H1 (cell line): ENCODE measurements at regions of chr11 and their contacts with region 1.

Region 1: DNA sequence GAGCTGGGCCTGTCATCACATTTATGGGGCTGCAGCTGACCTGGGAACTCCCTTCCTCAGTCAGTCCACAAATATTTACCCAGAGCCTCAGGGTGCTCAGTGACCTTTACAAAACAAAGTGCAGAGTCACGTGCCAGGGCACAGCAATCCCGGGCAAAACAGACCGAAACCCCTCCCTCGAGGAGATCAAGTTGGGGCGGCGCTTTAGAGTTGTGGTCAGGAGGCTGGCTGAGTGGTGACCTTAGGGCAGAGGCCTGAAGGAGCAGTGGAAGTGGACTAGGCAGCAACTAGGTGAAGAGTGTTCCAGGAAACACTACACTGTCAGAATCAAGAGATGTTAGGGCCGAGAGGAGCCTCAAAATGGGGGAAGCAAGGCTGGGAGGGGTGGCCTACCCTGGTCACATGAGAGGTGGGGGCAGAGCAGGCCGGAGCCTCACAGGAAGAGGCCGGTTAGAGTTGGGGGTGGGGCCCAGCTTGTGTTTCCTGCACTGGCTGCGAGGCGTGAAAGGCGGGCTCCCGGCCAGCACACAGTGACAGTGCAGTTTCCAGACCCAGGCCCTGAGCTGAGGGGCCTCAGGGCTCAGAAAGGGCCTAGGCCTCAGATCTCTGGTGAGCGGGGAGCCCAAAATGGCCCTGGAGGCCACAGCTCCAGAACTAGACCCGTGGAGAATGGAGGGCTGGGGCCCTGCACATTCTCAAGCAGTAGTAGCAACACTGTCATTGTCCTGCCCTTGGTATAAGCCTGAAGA is 3.7 kb upstream of the NEAT1 start:
- DNase-seq: peak; percentile 75 to 86
- H3K4me3 ChIP-seq: peak overlapping the region in 2 of 4 experiments; percentile 5 to 37; a peak in 2 of 8 replicates
- H3K27ac ChIP-seq: peak overlapping the region; percentile 87
- H3K4me1 ChIP-seq: peaks cover 21 to 66% (median 46%) of the 10 kb centered on the region in 4 experiments
- H3K27me3 ChIP-seq: no peaks in the 10 kb centered on the region; a peak in 1 of 7 replicates
- CTCF ChIP-seq: no peak
- EP300 ChIP-seq: peak; percentile 13 to 75; a peak in 2 of 3 replicates
- POLR2A ChIP-seq: no peak; a peak in 2 of 3 replicates
- RAD21 ChIP-seq: no peak; a peak in 1 of 4 replicates

Region 2: DNA sequence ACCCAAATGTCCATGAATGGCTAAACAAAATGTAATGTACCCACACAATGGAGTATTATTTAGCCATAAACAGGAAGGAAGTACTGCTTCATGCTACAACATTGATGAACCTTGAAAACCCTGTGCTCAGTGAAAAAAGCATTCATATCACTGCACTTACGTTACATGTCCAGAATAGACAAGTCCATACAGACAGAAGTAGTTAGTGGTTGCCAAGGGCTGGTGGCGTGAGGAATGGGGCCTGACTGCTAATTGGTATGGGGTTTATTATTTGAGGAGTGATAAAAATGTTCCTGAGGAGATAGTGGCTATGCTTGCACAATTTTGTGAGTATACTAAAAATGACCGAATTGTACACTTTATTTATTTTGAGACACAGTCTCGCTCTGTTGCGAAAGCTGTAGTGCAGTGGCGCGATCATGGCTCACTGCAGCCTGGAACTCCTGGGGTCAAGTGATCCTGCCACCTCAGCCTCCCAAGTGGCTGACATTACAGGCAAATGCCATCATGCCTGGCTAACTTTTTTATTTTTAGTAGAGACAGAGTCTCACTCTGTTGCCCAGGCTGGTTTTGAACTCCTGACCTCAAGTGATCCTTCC is 276.9 kb before region 1 on chr11:
- CTCF ChIA-PET with region 1: no interaction called
- POLR2A ChIA-PET with region 1: no interaction called
- DNase-seq: no peak
- H3K4me3 ChIP-seq: no peak overlapping the region
- H3K27ac ChIP-seq: no peak overlapping the region
- H3K4me1 ChIP-seq: no peaks in the 10 kb centered on the region
- H3K27me3 ChIP-seq: no peaks in the 10 kb centered on the region
- CTCF ChIP-seq: no peak
- EP300 ChIP-seq: no peak
- POLR2A ChIP-seq: no peak
- RAD21 ChIP-seq: no peak

Region 3: GRCh38 chr11:65159012-65159411 is 259.9 kb before region 1 on chr11:
- CTCF ChIA-PET with region 1: no interaction called
- POLR2A ChIA-PET with region 1: no interaction called
- DNase-seq: no peak
- H3K4me3 ChIP-seq: no peak overlapping the region
- H3K27ac ChIP-seq: no peak overlapping the region
- H3K4me1 ChIP-seq: no peaks in the 10 kb centered on the region
- H3K27me3 ChIP-seq: no peaks in the 10 kb centered on the region
- CTCF ChIP-seq: no peak
- EP300 ChIP-seq: no peak
- POLR2A ChIP-seq: no peak
- RAD21 ChIP-seq: no peak

Region 4: GRCh38 chr11:65354265-65355012 is 64.4 kb before region 1 on chr11 and contains the start of gene TIGD3:
- CTCF ChIA-PET with region 1: interaction called, 16 read pairs
- POLR2A ChIA-PET with region 1: interaction called, 5 read pairs
- DNase-seq: peak; percentile 85 to 98
- H3K4me3 ChIP-seq: peak within 1 kb of the TSS; percentile 65 to 90 (median 78)
- H3K27ac ChIP-seq: no peak within 1 kb of the TSS
- H3K4me1 ChIP-seq: peaks cover 0 to 10% (median 3%) of the 10 kb centered on the region in 4 experiments; a peak in 5 of 7 replicates
- H3K27me3 ChIP-seq: peaks cover 7 to 29% (median 19%) of the 10 kb centered on the region in 4 experiments
- CTCF ChIP-seq: no peak
- EP300 ChIP-seq: no peak
- POLR2A ChIP-seq: peak in 1 of 2 experiments; percentile 11; a peak in 1 of 3 replicates
- RAD21 ChIP-seq: no peak
- total RNA-seq, gene TIGD3: 0.88 and 1.3 TPM in 2 replicates

Region 5: GRCh38 chr11:65391007-65391406 is 27.9 kb before region 1 on chr11:
- CTCF ChIA-PET with region 1: interaction called, 57 read pairs
- POLR2A ChIA-PET with region 1: interaction called, 14 read pairs
- DNase-seq: no peak
- H3K4me3 ChIP-seq: no peak overlapping the region
- H3K27ac ChIP-seq: no peak overlapping the region
- H3K4me1 ChIP-seq: peaks cover 0 to 14% (median 5%) of the 10 kb centered on the region in 4 experiments; a peak in 5 of 7 replicates
- H3K27me3 ChIP-seq: 0 out of 7 replicates have a peak, but pooled peaks cover 0 to 2% (median 0%) of the 10 kb centered on the region in 4 experiments
- CTCF ChIP-seq: peak in 2 of 3 experiments; percentile 24 to 29; a peak in 2 of 4 replicates
- EP300 ChIP-seq: no peak
- POLR2A ChIP-seq: no peak
- RAD21 ChIP-seq: no peak

Region 6: GRCh38 chr11:65429724-65430405 is 11.0 kb after region 1 on chr11:
- CTCF ChIA-PET with region 1: interaction called, 25 read pairs
- POLR2A ChIA-PET with region 1: interaction called, 33 read pairs
- DNase-seq: no peak
- H3K4me3 ChIP-seq: no peak overlapping the region
- H3K27ac ChIP-seq: no peak overlapping the region
- H3K4me1 ChIP-seq: peaks cover 4 to 26% (median 7%) of the 10 kb centered on the region in 4 experiments
- H3K27me3 ChIP-seq: no peaks in the 10 kb centered on the region
- CTCF ChIP-seq: 0 out of 4 replicates have a peak, but pooled peaks of 1 of the 3 experiments have one; percentile 3
- EP300 ChIP-seq: no peak
- POLR2A ChIP-seq: no peak
- RAD21 ChIP-seq: no peak

Region 7: GRCh38 chr11:65454696-65455456 is 36.0 kb after region 1 on chr11:
- CTCF ChIA-PET with region 1: interaction called, 430 read pairs
- POLR2A ChIA-PET with region 1: interaction called, 79 read pairs
- DNase-seq: peak; percentile 69 to 92
- H3K4me3 ChIP-seq: peak overlapping the region; percentile 46 to 67 (median 54); a peak in 7 of 8 replicates
- H3K27ac ChIP-seq: no peak overlapping the region
- H3K4me1 ChIP-seq: peaks cover 2 to 11% (median 6%) of the 10 kb centered on the region in 4 experiments; a peak in 6 of 7 replicates
- H3K27me3 ChIP-seq: peaks cover 20 to 59% (median 53%) of the 10 kb centered on the region in 4 experiments
- CTCF ChIP-seq: no peak
- EP300 ChIP-seq: no peak
- POLR2A ChIP-seq: peak in 1 of 2 experiments; percentile 29; a peak in 1 of 3 replicates
- RAD21 ChIP-seq: no peak

Region 8: DNA sequence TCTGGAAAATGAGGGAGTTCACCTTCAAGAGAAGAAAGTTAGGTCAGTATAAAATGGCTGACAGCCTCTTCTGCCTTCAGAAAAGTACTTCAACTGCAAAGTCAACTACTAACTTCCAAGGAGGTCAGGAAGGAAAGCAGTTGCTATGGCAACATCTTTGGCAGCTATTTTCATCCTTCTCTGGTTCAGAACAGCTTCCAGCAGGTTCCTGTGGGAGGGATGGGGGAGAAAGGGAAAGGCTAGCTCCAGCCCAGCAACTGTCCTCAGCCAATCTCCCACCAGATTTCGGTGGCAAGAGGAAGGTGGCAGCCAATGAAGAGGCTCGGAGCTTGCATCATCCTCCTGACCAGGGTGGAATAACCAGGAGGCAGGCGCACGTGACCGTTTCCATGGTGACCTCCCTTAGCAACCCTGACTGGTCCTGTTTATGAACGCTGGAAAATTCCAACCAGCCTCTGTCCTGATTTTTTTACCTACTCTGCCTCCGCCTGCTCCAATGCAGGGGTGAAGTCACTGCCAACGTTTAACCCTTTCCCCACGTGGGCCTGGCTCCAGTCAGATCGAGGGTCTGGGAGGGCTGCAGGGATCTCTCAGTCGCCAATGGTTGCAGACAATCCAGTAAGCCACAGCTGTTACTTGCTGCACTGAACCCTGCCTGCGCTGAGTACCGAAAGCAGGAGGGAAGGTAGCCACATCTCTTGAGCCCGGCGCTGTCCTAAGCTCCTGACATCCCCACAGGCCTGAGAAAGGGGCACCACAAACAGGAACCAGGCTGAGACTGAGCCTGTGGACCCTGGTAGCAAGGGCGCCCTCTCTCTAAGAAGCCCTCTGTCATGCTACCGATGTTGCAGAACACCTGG is 68.8 kb after region 1 on chr11:
- CTCF ChIA-PET with region 1: interaction called, 75 read pairs
- POLR2A ChIA-PET with region 1: interaction called, 184 read pairs
- DNase-seq: peak; percentile 95 to 97
- H3K4me3 ChIP-seq: peak overlapping the region; percentile 24 to 49 (median 40); a peak in 7 of 8 replicates
- H3K27ac ChIP-seq: peak overlapping the region; percentile 96
- H3K4me1 ChIP-seq: peaks cover 44 to 56% (median 49%) of the 10 kb centered on the region in 4 experiments
- H3K27me3 ChIP-seq: no peaks in the 10 kb centered on the region
- CTCF ChIP-seq: no peak
- EP300 ChIP-seq: no peak; a peak in 1 of 3 replicates
- POLR2A ChIP-seq: peak in 1 of 2 experiments; percentile 68; a peak in 2 of 3 replicates
- RAD21 ChIP-seq: no peak

Region 9: DNA sequence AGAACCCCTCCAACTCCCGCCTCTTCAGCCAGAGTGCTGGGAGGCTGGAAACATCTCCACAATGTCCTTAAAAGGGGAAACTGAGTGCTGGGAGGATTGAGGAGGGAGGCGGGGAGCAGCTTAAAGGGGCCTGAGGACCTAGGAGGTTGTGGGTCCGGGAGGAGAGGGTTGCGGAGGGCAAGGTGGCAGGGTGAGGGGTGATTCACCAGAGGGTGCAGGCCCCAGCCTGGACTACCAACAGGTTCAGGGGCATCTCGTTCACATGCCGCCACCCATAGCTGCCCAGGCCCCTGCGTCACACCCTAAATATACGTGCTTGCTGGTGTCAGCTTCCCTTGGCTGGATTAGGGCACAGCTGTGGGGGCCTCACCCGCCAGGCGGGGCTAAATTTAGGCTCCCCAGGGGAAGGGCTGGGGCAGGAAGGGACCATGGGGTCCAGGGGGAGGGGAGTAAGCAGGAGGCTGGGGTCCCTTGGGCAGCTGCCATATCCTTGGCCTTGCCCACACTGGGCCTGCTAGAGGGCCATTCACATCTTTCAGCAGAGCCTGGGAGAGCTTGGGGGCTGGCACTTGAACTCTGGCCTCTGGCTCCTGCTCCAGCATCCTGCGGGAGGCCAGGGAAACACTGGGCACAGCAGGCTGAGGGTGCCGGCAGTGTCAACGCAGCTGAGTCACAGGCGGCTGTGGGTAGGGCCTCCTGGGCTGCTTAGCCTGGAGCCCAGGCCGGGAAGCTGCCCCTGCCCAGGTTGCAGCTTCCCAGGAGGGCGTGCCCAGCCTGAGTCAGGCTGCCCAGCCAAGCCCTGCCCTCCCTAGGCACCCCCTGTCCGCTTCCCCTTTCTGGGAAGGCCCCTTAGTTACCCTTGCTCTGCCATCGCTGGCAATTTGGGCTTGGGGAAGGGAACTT is 158.2 kb after region 1 on chr11:
- CTCF ChIA-PET with region 1: no interaction called
- POLR2A ChIA-PET with region 1: no interaction called
- DNase-seq: no peak
- H3K4me3 ChIP-seq: no peak overlapping the region; a peak in 1 of 8 replicates
- H3K27ac ChIP-seq: no peak overlapping the region
- H3K4me1 ChIP-seq: peaks cover 8 to 23% (median 15%) of the 10 kb centered on the region in 4 experiments; a peak in 6 of 7 replicates
- H3K27me3 ChIP-seq: peaks cover 8 to 40% (median 29%) of the 10 kb centered on the region in 4 experiments
- CTCF ChIP-seq: no peak
- EP300 ChIP-seq: no peak
- POLR2A ChIP-seq: no peak
- RAD21 ChIP-seq: no peak